Naive thymus-derived CD8-positive, alpha-beta T cell (primary cell): ENCODE measurements at regions of chr12 and their contacts with region 1.

Region 1: GRCh38 chr12:64610149-64610678 is at the start of gene RASSF3:
- DNase-seq: peak; percentile 59 to 87 (median 74)
- ATAC-seq: peak; percentile 66 to 67
- H3K4me3 Mint-ChIP-seq: peak within 1 kb of the TSS; percentile 87 to 100 (median 98)
- H3K27ac Mint-ChIP-seq: peak within 1 kb of the TSS; percentile 93 to 98 (median 96)
- H3K4me1 Mint-ChIP-seq: peaks cover 12 to 46% (median 42%) of the 10 kb centered on the region in 4 donors
- H3K27me3 Mint-ChIP-seq: no peaks in the 10 kb centered on the region
- polyA plus RNA-seq, gene RASSF3: 5.5 to 7.8 (median 5.7) TPM

Region 2: DNA sequence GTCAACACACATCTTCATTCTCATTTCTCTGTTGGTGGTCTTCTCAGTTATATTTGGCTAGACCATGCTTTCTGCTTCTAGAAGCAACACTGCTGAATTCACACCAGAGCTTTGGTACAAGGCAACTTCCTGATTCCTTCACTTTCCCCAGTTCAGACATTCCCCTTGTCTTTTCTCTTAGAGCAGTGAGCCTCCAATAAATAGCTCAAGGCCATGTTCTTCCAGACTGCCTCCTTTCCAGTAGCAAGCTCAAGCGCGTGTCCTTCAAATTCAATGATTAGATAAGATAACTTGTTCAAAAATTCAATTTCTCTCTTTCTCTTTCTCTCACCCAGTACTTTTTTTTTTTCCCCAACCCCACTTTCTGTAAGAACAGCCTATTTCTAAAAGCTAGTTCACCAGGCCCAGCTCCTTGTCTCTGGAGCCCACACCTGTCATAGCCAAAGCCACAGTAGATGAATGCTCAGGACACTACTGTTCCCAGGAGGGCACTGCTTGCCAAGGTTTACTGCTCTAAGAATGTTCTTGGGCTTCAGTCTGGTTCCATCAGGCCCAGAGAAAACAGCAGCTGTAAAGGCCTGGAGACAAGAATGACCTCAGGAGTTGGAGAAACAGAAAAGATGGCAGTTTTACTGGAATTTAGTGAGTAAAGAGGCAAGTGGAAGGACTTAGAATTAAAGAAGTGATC is 140.6 kb before region 1 on chr12:
- POLR2A ChIA-PET with region 1: no interaction called
- DNase-seq: no peak
- ATAC-seq: no peak
- H3K4me3 Mint-ChIP-seq: no peak overlapping the region
- H3K27ac Mint-ChIP-seq: peak overlapping the region in 3 of 10 donors; percentile 2 to 61 (median 3)
- H3K4me1 Mint-ChIP-seq: peaks cover 0 to 2% (median 0%) of the 10 kb centered on the region in 4 donors
- H3K27me3 Mint-ChIP-seq: no peaks in the 10 kb centered on the region

Region 3: GRCh38 chr12:64480148-64480547 is 130.1 kb before region 1 on chr12:
- POLR2A ChIA-PET with region 1: no interaction called
- DNase-seq: no peak
- ATAC-seq: no peak
- H3K4me3 Mint-ChIP-seq: no peak overlapping the region
- H3K27ac Mint-ChIP-seq: no peak overlapping the region
- H3K4me1 Mint-ChIP-seq: peaks cover 0 to 5% (median 2%) of the 10 kb centered on the region in 4 donors
- H3K27me3 Mint-ChIP-seq: no peaks in the 10 kb centered on the region

Region 4: DNA sequence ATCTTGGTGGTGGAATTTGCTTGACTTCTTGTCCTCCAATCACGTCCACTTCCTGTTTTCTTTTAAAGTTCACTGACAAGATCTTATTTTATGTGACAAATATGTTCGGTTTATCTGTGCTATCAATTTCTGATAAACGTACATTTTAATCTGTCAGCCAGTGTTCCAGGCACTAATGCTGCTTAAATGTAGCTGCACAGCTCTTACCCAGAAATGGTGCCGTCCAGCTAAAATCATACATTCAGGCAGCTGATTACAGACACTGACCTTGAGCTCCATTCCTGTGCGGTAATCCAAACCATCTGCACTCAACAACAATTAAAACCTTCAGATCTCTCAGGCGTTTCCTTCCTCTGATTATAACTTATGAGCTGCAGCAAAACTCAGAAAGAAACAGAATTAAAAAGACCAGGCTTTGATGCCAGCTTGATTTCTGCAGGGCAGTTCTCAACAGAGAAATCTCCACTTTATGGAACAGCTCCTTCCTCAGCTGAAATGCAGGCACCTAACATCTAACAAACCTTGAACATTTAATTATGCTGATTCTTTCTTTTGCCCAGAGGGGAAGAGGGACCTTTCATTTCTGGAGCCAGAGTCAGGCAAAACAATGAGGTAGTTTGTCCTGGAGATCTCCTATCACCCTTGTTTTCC is 26.3 kb before region 1 on chr12:
- POLR2A ChIA-PET with region 1: interaction called, 39 read pairs
- DNase-seq: peak in 2 of 10 donors; percentile 23
- ATAC-seq: peak; percentile 53 to 57
- H3K4me3 Mint-ChIP-seq: peak overlapping the region; percentile 48 to 85 (median 70)
- H3K27ac Mint-ChIP-seq: peak overlapping the region; percentile 41 to 92 (median 84)
- H3K4me1 Mint-ChIP-seq: peaks cover 16 to 33% (median 30%) of the 10 kb centered on the region in 4 donors
- H3K27me3 Mint-ChIP-seq: no peaks in the 10 kb centered on the region

Region 5: DNA sequence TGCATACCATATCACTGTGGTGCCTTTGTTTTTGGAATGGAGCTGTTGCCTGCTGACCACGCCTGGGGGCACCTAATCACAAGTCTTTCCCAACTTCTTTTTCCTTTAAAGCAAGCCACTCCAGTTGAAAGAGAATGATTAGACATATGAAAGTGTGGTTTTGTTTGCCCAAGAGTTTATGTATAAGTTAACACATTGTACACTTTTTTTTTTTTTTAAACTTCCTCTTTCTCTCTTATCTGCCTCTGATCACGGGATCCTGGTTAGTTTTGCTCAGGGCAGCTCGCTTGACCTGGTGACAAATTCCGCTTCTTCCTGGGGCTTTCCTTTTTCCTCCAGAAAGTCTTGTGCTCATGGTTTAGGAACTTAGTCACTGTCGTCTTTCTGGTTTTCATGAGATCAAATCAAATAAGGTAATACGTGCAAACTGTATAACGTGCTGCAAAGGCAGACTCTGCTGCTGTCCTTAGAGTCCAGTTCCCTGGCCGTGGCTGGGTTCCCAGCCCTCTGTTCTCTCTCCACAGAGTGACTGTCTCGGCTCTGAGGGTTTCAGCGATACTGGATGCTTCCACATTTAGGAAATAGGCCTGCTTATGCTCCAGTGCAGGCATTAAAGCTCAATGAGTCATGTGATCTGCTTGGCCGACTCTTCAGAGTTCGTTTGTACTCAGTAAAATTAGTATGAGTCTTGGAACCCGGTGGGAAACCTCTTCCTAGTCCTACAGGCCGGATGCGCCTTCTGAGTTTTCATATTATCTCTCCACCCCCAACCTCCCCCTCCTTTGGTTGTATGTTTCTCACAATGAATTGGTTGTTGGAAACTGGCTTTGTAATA is 15.2 kb after region 1 on chr12:
- POLR2A ChIA-PET with region 1: interaction called, 31 read pairs
- DNase-seq: no peak
- ATAC-seq: peak; percentile 69 to 75
- H3K4me3 Mint-ChIP-seq: peak overlapping the region; percentile 66 to 94 (median 90)
- H3K27ac Mint-ChIP-seq: peak overlapping the region; percentile 87 to 97 (median 93)
- H3K4me1 Mint-ChIP-seq: peaks cover 24 to 87% (median 70%) of the 10 kb centered on the region in 4 donors
- H3K27me3 Mint-ChIP-seq: no peaks in the 10 kb centered on the region

Region 6: GRCh38 chr12:64679487-64679983 is 69.3 kb after region 1 on chr12:
- POLR2A ChIA-PET with region 1: interaction called, 368 read pairs
- DNase-seq: peak; percentile 36 to 83 (median 72)
- ATAC-seq: peak; percentile 61 to 68
- H3K4me3 Mint-ChIP-seq: peak overlapping the region; percentile 64 to 83 (median 76)
- H3K27ac Mint-ChIP-seq: peak overlapping the region; percentile 93 to 99 (median 97)
- H3K4me1 Mint-ChIP-seq: peaks cover 43 to 95% (median 91%) of the 10 kb centered on the region in 4 donors
- H3K27me3 Mint-ChIP-seq: peaks cover 0 to 1% (median 0%) of the 10 kb centered on the region in 5 donors